ENCODE measurements at regions of chr12 and their contacts with region 1.

Region 1: GRCh38 chr12:8914716-8915526 is 612 bp downstream of the PHC1 start:
- DNase-seq: peak in 9 of 10 donors; percentile 19 to 91 (median 38)

Region 2: DNA sequence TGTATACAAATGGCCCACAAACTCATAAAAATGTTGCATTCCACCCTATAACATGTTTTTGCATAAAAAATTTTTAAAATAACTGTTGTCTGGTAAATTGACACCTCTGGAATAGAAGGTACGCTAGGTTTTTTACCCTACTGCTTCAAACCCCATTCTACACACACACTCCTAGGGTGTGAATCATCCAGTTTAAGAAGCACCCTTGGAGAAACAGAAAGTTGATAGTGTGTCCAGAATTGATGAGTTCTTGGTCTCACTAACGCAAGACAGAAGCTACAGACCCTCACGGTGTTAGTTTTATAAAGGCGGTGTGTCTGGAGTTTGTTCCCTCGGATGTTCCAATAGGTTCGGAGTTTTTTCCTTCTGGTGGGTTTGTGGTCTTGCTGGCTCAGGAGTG is 534.3 kb after region 1 on chr12:
- intact Hi-C with region 1: loop called (anchors 10 kb)
- DNase-seq: no peak